ENCODE measurements at regions of chr2 and their contacts with region 1.

Region 1: GRCh38 chr2:27942612-27943547 is 52.4 kb downstream of the BABAM2 start:
- DNase-seq: no peak
- H3K4me3 ChIP-seq: no peak overlapping the region
- H3K27ac ChIP-seq: no peak overlapping the region
- H3K4me1 ChIP-seq: peaks cover 18% of the 10 kb centered on the region
- H3K27me3 ChIP-seq: no peaks in the 10 kb centered on the region
- CTCF ChIP-seq: no peak
- POLR2A ChIP-seq: no peak

Region 2: DNA sequence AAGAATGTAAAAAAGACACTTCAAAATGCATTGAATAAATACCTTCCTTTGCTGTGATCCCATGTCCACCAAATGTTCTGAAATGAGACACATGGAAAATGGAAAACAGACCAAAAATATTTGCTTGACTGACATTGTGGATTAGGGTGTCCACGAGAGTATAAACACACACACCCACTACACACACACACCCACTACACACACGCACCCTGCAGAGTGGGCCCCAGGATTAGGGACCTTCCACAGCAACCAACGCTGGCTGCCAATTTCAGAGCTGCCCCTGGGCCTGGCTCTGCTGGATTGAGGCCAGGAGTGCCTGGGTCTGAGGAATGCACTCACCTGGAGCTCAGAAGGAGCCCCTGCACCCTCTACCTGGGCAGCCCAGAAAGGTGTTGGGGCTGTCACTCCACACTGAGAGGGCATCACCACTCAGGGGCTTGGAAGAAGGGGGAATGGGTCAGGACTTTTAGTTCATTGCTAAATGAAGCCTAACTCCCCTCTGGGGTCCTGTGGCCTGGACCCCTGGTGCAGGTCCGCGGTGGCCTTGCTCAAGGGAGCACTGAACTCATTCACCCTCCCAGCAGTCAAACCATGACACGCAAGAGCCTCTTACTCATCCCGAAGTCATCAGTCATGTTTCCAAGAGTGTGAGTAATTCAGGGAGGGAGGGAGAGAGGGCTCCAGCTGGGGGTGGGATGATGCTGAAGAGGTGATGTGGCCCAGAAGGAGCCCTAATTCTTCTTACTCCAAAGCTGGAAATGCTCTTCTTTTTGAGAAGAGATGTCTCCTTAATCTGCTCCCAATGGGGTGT is 502.8 kb after region 1 on chr2:
- CTCF ChIA-PET with region 1: no interaction called
- POLR2A ChIA-PET with region 1: interaction called, 10 read pairs
- dilution Hi-C with region 1: no loop called
- intact Hi-C with region 1: no loop called
- DNase-seq: peak; percentile 65
- H3K4me3 ChIP-seq: no peak overlapping the region
- H3K27ac ChIP-seq: no peak overlapping the region
- H3K4me1 ChIP-seq: peaks cover 19% of the 10 kb centered on the region
- H3K27me3 ChIP-seq: no peaks in the 10 kb centered on the region
- CTCF ChIP-seq: no peak
- POLR2A ChIP-seq: no peak

Measured in endothelial cell of umbilical vein (primary cell).